Cardiac septum (tissue), 1 donor: ENCODE measurements at regions of chr1 and their contacts with region 1.

Region 1: DNA sequence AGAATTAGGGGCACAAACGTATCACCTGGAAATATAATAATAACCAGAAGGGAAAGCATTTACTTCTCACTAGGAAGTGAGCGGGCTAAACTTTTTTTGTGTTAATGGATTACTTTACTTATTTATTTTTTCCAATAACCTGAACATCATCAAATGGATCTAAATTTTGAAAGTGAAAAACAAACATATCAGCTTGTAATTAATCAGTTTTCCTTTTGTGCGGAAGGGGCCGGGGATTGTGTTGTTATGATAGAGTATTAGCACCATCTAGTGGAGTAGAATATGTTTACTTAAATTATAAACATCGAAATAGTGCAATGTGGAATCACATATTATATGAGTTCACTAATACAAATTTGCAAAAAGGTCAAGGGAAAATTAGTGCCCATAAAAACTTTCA is 9.0 kb downstream of the CFH start:
- DNase-seq: no peak

Region 2: GRCh38 chr1:196148367-196148970 is 512.4 kb before region 1 on chr1:
- intact Hi-C with region 1: loop called (anchors 5 kb)
- DNase-seq: no peak

Region 3: GRCh38 chr1:196317535-196318522 is 343.0 kb before region 1 on chr1:
- intact Hi-C with region 1: loop called (anchors 10 kb)
- DNase-seq: no peak

Region 4: GRCh38 chr1:196355206-196355786 is 305.6 kb before region 1 on chr1:
- intact Hi-C with region 1: loop called (anchors 10 kb)
- DNase-seq: no peak

Region 5: GRCh38 chr1:196400478-196401451 is 260.1 kb before region 1 on chr1:
- intact Hi-C with region 1: no loop called
- DNase-seq: no peak